ENCODE measurements at regions of chr20 and their contacts with region 1.

Region 1: DNA sequence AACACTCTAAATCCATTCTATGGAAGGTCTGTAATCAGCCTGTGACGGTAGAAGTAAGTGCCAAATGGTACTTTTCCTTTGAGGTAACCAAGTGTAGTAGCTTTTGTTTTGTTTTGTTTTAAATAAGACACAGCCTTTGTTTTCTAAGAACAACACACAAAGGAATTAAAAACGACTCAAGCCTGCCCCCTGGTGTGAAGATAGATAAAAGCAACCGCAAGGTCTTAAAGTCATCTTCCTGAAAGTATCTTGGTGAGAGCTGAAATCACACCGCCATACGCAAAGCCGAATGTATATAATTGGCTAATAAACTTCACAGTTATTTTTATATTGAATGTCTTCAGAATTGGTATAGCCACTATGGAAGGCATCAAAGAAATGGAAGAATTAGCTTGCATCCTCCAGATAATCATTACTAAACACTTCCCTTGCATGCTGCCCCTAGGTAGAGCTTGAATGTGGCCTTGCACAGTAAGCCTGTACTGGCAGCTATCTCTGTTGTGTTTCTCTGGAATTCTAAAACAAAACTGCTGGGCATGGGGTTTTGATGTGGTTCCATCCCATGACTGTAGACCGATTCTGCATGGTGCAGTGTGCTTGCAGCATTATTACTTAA is 95.6 kb downstream of the LAMP5 start:
- DNase-seq: peak; percentile 32
- H3K4me3 ChIP-seq: no peak overlapping the region; a peak in 1 of 4 replicates
- H3K27ac ChIP-seq: peak overlapping the region in 1 of 2 experiments; percentile 51; a peak in 1 of 4 replicates
- H3K4me1 ChIP-seq: peaks cover 0 to 14% of the 10 kb centered on the region in 2 experiments; a peak in 3 of 4 replicates
- H3K27me3 ChIP-seq: no peaks in the 10 kb centered on the region
- CTCF ChIP-seq: peak; percentile 83
- EP300 ChIP-seq: no peak
- RAD21 ChIP-seq: peak; percentile 93

Region 2: GRCh38 chr20:9344083-9344920 is 265.7 kb before region 1 on chr20:
- CTCF ChIA-PET with region 1: no interaction called
- POLR2A ChIA-PET with region 1: no interaction called
- DNase-seq: no peak
- H3K4me3 ChIP-seq: no peak overlapping the region
- H3K27ac ChIP-seq: peak overlapping the region; percentile 47 to 77; a peak in 3 of 4 replicates
- H3K4me1 ChIP-seq: peaks cover 11 to 17% of the 10 kb centered on the region in 2 experiments; a peak in 3 of 4 replicates
- H3K27me3 ChIP-seq: no peaks in the 10 kb centered on the region
- CTCF ChIP-seq: no peak
- EP300 ChIP-seq: no peak
- RAD21 ChIP-seq: no peak

Region 3: DNA sequence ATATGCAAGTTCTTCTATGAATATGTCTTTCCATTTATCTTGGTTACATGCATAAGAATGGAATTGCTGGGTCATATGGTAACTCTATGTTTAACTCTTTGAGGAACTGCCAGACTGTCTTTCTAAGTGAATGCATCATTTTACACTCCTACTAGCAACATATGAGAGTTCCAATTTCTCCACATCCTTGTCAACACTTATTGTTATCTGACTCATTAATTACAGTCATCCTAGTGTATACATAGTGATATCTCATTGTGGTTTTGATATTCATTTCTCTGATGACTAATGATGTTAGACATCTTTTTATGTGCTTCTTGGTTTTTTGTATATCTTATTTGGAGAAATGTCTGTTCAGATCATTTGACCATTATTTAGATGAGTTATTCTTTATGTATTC is 192.3 kb before region 1 on chr20:
- CTCF ChIA-PET with region 1: interaction called, 255 read pairs
- POLR2A ChIA-PET with region 1: no interaction called
- DNase-seq: no peak
- H3K4me3 ChIP-seq: no peak overlapping the region
- H3K27ac ChIP-seq: no peak overlapping the region
- H3K4me1 ChIP-seq: no peaks in the 10 kb centered on the region
- H3K27me3 ChIP-seq: no peaks in the 10 kb centered on the region
- CTCF ChIP-seq: no peak
- EP300 ChIP-seq: no peak
- RAD21 ChIP-seq: no peak

Region 4: DNA sequence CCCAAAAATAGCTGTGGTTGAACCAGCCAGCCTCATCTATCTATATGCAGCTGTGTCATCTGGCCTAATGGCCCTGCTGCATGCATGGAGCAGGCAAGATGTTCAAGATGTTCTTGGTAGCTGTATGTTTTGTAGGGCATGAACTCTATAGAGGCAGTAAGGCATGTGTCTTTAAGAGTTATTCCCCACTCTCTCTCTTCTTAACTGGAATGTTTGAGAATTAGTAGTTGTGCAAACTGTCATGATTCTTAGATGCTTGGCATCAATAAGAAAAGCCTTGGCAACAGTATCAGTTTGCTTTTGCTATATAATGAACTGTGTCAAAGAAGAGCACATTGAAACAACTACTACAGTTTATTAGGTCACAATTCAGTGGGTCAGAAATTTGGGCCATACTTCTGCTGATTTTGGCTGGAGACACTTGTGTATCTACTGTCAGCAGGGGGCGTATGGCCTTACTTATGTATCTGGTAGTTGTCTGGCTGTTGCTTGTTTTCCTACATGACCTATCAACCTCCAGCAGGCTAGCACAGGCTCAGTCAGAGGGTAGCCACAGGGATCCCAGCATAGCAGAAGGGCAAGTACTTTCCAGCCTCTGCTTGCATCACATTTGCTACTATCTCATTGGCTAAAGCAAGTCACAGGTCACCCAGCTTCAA is 151.7 kb before region 1 on chr20:
- CTCF ChIA-PET with region 1: interaction called, 11 read pairs
- POLR2A ChIA-PET with region 1: no interaction called
- DNase-seq: no peak
- H3K4me3 ChIP-seq: no peak overlapping the region
- H3K27ac ChIP-seq: no peak overlapping the region
- H3K4me1 ChIP-seq: peaks cover 0 to 14% of the 10 kb centered on the region in 2 experiments; a peak in 2 of 4 replicates
- H3K27me3 ChIP-seq: no peaks in the 10 kb centered on the region
- CTCF ChIP-seq: peak; percentile 42; the same call in 1 of the 2 replicates
- EP300 ChIP-seq: no peak
- RAD21 ChIP-seq: peak; percentile 26; the same call in 1 of the 2 replicates

Region 5: GRCh38 chr20:9474835-9475415 is 135.1 kb before region 1 on chr20:
- CTCF ChIA-PET with region 1: interaction called, 26 read pairs
- POLR2A ChIA-PET with region 1: no interaction called
- DNase-seq: no peak
- H3K4me3 ChIP-seq: no peak overlapping the region
- H3K27ac ChIP-seq: peak overlapping the region; percentile 43 to 71
- H3K4me1 ChIP-seq: peaks cover 11 to 18% of the 10 kb centered on the region in 2 experiments; a peak in 3 of 4 replicates
- H3K27me3 ChIP-seq: no peaks in the 10 kb centered on the region
- CTCF ChIP-seq: no peak
- EP300 ChIP-seq: no peak
- RAD21 ChIP-seq: no peak

Region 6: DNA sequence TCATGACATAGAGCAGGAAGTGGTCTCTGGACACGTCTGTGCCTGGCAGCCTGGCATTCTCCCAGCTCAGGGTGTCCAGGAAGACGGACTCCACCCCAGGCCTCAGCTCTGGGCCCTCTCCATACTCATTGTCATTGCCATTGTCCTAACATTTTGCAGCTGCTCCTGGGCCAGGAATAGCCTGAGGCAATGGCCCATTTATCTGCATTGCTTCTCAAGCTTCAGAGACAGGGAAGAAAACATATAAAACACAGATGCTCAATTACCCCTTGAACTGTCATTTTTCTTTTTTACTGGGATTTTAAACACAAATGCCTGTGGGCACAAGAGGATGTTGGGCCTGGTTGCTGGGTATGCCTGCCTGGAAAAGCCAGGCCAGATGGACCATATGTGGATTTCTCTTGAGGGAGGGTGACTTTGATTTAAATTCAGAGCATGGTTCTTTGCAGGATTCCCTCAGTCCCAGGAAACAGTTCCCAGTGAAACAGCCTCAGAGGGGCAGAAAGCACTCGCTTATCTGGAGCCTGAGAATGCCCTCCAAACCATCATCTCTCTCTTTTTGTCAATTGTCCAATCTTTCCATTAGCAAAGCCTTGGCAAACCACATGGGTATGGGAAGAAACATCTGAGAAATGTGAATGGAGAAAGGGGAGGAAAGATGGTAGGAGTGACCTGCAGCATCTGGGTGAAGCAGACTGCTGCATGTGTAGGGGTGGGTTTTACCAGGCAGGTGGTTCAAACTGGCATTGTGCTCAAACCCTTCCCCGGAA is 77.7 kb before region 1 on chr20:
- CTCF ChIA-PET with region 1: interaction called, 10 read pairs
- POLR2A ChIA-PET with region 1: no interaction called
- DNase-seq: peak; percentile 70
- H3K4me3 ChIP-seq: no peak overlapping the region
- H3K27ac ChIP-seq: peak overlapping the region; percentile 76 to 97
- H3K4me1 ChIP-seq: peaks cover 15 to 28% of the 10 kb centered on the region in 2 experiments
- H3K27me3 ChIP-seq: no peaks in the 10 kb centered on the region
- CTCF ChIP-seq: no peak
- EP300 ChIP-seq: peak; percentile 70 to 98
- RAD21 ChIP-seq: peak; percentile 55

Region 7: GRCh38 chr20:9588706-9589105 is 21.3 kb before region 1 on chr20:
- CTCF ChIA-PET with region 1: interaction called, 15 read pairs
- POLR2A ChIA-PET with region 1: no interaction called
- DNase-seq: no peak
- H3K4me3 ChIP-seq: no peak overlapping the region
- H3K27ac ChIP-seq: no peak overlapping the region
- H3K4me1 ChIP-seq: no peaks in the 10 kb centered on the region
- H3K27me3 ChIP-seq: no peaks in the 10 kb centered on the region
- CTCF ChIP-seq: no peak
- EP300 ChIP-seq: no peak
- RAD21 ChIP-seq: no peak

Region 8: DNA sequence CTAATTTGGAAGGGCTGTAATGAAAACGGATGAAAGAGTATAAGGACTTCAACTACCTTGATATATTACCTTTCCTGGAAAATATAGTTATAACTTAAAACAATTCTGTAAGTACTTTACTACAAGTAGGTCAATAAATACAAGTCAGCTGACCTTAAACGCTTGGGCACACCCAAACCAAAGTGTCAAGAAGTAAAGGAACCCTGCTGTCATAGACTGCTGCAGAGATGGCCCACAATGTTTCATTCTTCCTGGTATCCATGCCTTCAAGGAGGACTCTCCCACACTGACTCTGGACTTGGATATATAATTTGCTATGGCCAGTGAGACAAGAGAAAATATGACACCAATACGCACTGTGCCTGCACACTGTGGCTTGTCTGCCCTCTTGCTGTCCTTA is 36.4 kb after region 1 on chr20:
- CTCF ChIA-PET with region 1: no interaction called
- POLR2A ChIA-PET with region 1: no interaction called
- DNase-seq: no peak
- H3K4me3 ChIP-seq: no peak overlapping the region
- H3K27ac ChIP-seq: no peak overlapping the region
- H3K4me1 ChIP-seq: no peaks in the 10 kb centered on the region
- H3K27me3 ChIP-seq: no peaks in the 10 kb centered on the region
- CTCF ChIP-seq: no peak
- EP300 ChIP-seq: no peak
- RAD21 ChIP-seq: no peak